ENCODE measurements at regions of chr15 and their contacts with region 1.

Region 1: GRCh38 chr15:82108489-82109078 is 62.8 kb upstream of the MEX3B start:
- DNase-seq: peak; percentile 57
- H3K4me3 ChIP-seq: no peak overlapping the region
- H3K27ac ChIP-seq: no peak overlapping the region
- H3K4me1 ChIP-seq: peaks cover 13% of the 10 kb centered on the region
- H3K27me3 ChIP-seq: no peaks in the 10 kb centered on the region
- CTCF ChIP-seq: peak; percentile 93 to 97

Region 2: GRCh38 chr15:81480645-81481053 is 627.9 kb before region 1 on chr15:
- CTCF ChIA-PET with region 1: no interaction called
- dilution Hi-C with region 1: no loop called
- in situ Hi-C with region 1: no loop called
- intact Hi-C with region 1: loop called (anchors 1 kb)
- DNase-seq: peak; percentile 27
- H3K4me3 ChIP-seq: no peak overlapping the region
- H3K27ac ChIP-seq: no peak overlapping the region
- H3K4me1 ChIP-seq: no peaks in the 10 kb centered on the region
- H3K27me3 ChIP-seq: no peaks in the 10 kb centered on the region
- CTCF ChIP-seq: peak; percentile 63 to 78

Region 3: DNA sequence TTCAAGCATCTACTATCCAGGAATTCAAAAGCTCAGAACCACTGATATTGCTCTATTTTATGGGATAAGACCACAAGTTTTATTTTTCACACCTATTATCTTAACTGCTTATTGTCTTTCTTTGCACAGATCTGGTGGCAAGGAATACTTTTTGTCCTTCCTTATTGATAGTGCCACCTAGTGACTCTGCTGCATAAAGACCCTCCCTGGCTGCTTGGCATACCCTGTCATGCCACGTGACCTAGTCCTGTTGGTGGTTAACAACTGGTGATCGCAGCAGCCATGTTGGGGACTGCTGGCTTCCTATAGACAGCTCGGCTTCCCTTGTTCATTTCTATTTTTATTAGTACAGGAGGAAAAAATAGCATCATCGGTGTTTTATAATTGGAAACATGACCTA is 299.0 kb before region 1 on chr15:
- CTCF ChIA-PET with region 1: no interaction called
- dilution Hi-C with region 1: no loop called
- in situ Hi-C with region 1: no loop called
- intact Hi-C with region 1: loop called (anchors 2 kb)
- DNase-seq: no peak
- H3K4me3 ChIP-seq: no peak overlapping the region
- H3K27ac ChIP-seq: no peak overlapping the region
- H3K4me1 ChIP-seq: no peaks in the 10 kb centered on the region
- H3K27me3 ChIP-seq: no peaks in the 10 kb centered on the region
- CTCF ChIP-seq: peak in 1 of 2 donors; percentile 29

Region 4: GRCh38 chr15:82139823-82140268 is 31.3 kb after region 1 on chr15:
- CTCF ChIA-PET with region 1: interaction called, 32 read pairs
- dilution Hi-C with region 1: no loop called
- in situ Hi-C with region 1: no loop called
- intact Hi-C with region 1: loop called (anchors 1 kb)
- DNase-seq: peak; percentile 36
- H3K4me3 ChIP-seq: no peak overlapping the region
- H3K27ac ChIP-seq: no peak overlapping the region
- H3K4me1 ChIP-seq: peaks cover 9% of the 10 kb centered on the region
- H3K27me3 ChIP-seq: no peaks in the 10 kb centered on the region
- CTCF ChIP-seq: peak; percentile 68 to 72

Region 5: GRCh38 chr15:82168296-82168695 is 59.7 kb after region 1 on chr15:
- CTCF ChIA-PET with region 1: no interaction called
- dilution Hi-C with region 1: no loop called
- in situ Hi-C with region 1: no loop called
- intact Hi-C with region 1: no loop called
- DNase-seq: no peak
- H3K4me3 ChIP-seq: no peak overlapping the region
- H3K27ac ChIP-seq: no peak overlapping the region
- H3K4me1 ChIP-seq: peaks cover 7% of the 10 kb centered on the region
- H3K27me3 ChIP-seq: no peaks in the 10 kb centered on the region
- CTCF ChIP-seq: no peak